Psoas muscle (tissue), 8 donors: ENCODE measurements at regions of chr12 and their contacts with region 1.

Region 1: GRCh38 chr12:64451687-64452558 is at the start of gene TBK1:
- DNase-seq: peak; percentile 91 to 97
- ATAC-seq: peak; percentile 95 to 99 (median 98)
- H3K4me3 ChIP-seq: peak within 1 kb of the TSS; percentile 83
- H3K27ac ChIP-seq: peak within 1 kb of the TSS; percentile 94
- H3K4me1 ChIP-seq: peaks cover 20% of the 10 kb centered on the region
- H3K27me3 ChIP-seq: no peaks in the 10 kb centered on the region
- CTCF ChIP-seq: peak; percentile 15
- total RNA-seq, gene TBK1: 11.6 to 20.6 (median 19.7) TPM

Region 2: DNA sequence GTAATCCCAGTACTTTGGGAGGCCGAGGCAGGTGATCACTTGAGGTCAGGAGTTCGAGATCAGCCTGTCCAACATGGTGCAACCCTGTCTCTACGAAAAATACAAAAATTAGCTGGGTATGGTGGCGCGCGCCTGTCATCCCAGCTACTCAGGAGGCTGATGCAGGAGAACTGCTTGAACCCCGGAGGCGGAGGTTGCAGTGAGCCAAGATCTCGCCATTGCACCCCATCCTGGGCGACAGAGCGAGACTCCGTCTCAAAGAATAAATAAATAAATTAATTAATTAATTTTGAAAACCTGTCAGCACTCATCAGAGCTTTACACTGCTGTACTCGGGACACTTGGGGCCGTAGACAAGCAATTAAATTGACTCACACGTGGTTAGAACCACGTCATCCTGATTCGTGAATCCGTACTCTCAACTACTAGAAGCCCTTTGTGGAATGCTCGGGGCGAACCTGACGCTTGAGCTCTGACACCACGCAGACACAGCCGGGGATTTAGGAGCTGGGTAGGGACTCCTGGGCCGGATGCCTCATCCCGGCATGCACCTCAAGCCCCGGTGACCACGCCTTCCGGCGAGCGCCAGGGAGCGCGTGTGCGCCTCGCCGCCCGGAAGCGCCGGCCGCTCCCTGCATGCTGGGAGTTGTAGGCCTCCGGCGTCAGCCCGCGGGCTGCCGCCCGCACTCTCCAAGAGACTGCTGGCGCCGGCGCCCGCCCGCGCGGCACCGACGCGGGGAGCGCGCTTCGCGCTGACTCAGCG is 48.0 kb before region 1 on chr12 and contains the start of gene XPOT:
- intact Hi-C with region 1: loop called (anchors 5 kb)
- DNase-seq: peak; percentile 96 to 98
- ATAC-seq: peak; percentile 95 to 96 (median 96)
- H3K4me3 ChIP-seq: peak within 1 kb of the TSS; percentile 99
- H3K27ac ChIP-seq: peak within 1 kb of the TSS; percentile 99
- H3K4me1 ChIP-seq: peaks cover 8% of the 10 kb centered on the region
- H3K27me3 ChIP-seq: no peaks in the 10 kb centered on the region
- CTCF ChIP-seq: no peak
- total RNA-seq, gene XPOT: 23.9 to 41.5 (median 31.7) TPM

Region 3: GRCh38 chr12:64469455-64470142 is 17.7 kb after region 1 on chr12:
- intact Hi-C with region 1: loop called in 1 of 2 experiments (anchors 2 kb)
- DNase-seq: peak in 1 of 2 donors; percentile 67
- ATAC-seq: peak; percentile 90 to 93 (median 91)
- H3K4me3 ChIP-seq: no peak overlapping the region
- H3K27ac ChIP-seq: peak overlapping the region; percentile 79
- H3K4me1 ChIP-seq: peaks cover 23% of the 10 kb centered on the region
- H3K27me3 ChIP-seq: no peaks in the 10 kb centered on the region
- CTCF ChIP-seq: no peak